ENCODE measurements at regions of chr12 and their contacts with region 1.

Region 1: GRCh38 chr12:120971299-120972179 is 6.8 kb upstream of the HNF1A start:
- DNase-seq: no peak
- ATAC-seq: peak; percentile 74
- H3K4me3 ChIP-seq: no peak overlapping the region
- H3K27ac ChIP-seq: no peak overlapping the region
- H3K4me1 ChIP-seq: no peaks in the 10 kb centered on the region
- H3K27me3 ChIP-seq: no peaks in the 10 kb centered on the region

Region 2: GRCh38 chr12:120856980-120857379 is 114.6 kb before region 1 on chr12:
- intact Hi-C with region 1: loop called in 1 of 2 experiments (anchors 10 kb)
- DNase-seq: no peak
- ATAC-seq: no peak
- H3K4me3 ChIP-seq: no peak overlapping the region
- H3K27ac ChIP-seq: no peak overlapping the region
- H3K4me1 ChIP-seq: peaks cover 0 to 4% of the 10 kb centered on the region in 2 donors
- H3K27me3 ChIP-seq: no peaks in the 10 kb centered on the region

Measured in aorta (tissue), 5 donors.